ENCODE measurements at regions of chr20 and their contacts with region 1.

Region 1: DNA sequence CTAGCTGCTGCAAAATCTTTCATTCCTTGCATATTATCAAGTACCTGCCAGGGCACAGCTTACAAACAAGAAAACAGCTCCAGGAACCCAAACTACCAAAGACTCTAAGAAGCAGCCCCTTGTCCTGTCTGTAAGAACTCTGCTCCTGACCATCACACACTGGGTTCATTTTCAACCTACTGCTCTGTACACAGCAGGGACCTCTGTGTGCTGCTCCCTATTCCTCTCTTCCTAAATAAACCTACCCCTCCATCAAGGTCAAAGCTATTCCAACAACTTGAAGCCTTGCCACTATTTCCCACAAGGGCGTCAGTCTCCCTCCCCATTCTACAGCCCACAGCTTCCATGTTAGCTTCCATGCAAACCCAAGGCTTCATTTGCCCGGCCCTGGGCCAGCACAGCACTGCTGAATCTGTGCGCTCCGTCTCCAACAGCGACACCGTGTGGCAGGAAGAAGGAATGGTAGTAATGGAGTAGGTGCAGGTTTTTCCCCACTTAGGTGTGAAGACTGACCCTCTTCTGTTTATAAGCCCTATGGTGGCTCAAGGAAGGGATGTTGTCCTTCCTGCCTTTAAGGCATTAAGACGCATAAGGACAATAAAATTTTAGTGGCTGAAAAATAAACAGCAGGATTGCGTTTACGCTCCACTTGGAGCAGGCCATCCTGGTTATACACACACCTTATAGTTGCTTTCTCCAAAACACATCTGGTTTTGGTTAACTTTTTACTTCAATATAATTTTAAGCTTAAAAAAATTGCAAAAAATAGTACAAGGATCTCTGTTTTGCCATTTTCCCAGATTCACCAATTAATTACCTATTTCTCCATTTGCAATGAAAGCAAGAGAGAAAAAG is 115.2 kb upstream of the NXT1 start:
- DNase-seq: peak; percentile 71
- H3K4me3 Mint-ChIP-seq: no peak overlapping the region
- H3K27ac Mint-ChIP-seq: no peak overlapping the region
- H3K4me1 Mint-ChIP-seq: peaks cover 16% of the 10 kb centered on the region
- H3K27me3 Mint-ChIP-seq: no peaks in the 10 kb centered on the region
- CTCF ChIP-seq: peak; percentile 73

Region 2: GRCh38 chr20:22555791-22556564 is 679.4 kb before region 1 on chr20:
- CTCF ChIA-PET with region 1: no interaction called
- POLR2A ChIA-PET with region 1: no interaction called
- intact Hi-C with region 1: no loop called
- DNase-seq: no peak
- H3K4me3 Mint-ChIP-seq: no peak overlapping the region
- H3K27ac Mint-ChIP-seq: no peak overlapping the region
- H3K4me1 Mint-ChIP-seq: no peaks in the 10 kb centered on the region
- H3K27me3 Mint-ChIP-seq: peaks cover 30% of the 10 kb centered on the region
- CTCF ChIP-seq: no peak

Region 3: GRCh38 chr20:22729180-22729579 is 506.2 kb before region 1 on chr20:
- CTCF ChIA-PET with region 1: interaction called, 15 read pairs
- POLR2A ChIA-PET with region 1: no interaction called
- intact Hi-C with region 1: loop called (anchors 10 kb)
- DNase-seq: no peak
- H3K4me3 Mint-ChIP-seq: no peak overlapping the region
- H3K27ac Mint-ChIP-seq: no peak overlapping the region
- H3K4me1 Mint-ChIP-seq: peaks cover 7% of the 10 kb centered on the region
- H3K27me3 Mint-ChIP-seq: no peaks in the 10 kb centered on the region
- CTCF ChIP-seq: no peak

Region 4: DNA sequence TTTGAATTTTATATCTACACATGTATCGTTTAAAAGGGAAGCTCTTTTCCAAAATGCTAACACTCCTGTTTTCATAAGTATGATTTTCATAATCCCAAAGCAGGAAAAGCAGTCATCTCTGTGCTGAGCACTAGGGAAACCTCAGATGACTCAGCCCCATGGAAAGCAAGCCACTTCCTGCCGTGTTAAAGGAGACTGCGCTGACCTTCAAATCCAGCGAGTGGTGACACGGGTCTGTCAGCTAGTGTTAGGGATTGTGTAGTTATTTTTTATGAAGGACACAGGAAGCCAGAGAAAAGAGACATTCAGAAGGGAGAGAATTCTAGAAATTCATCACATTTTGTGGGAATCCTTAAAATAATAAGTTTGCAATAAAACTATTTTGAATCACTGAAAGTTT is 92.3 kb before region 1 on chr20:
- CTCF ChIA-PET with region 1: interaction called, 20 read pairs
- POLR2A ChIA-PET with region 1: no interaction called
- intact Hi-C with region 1: no loop called
- DNase-seq: peak; percentile 89
- H3K4me3 Mint-ChIP-seq: no peak overlapping the region
- H3K27ac Mint-ChIP-seq: peak overlapping the region; percentile 82
- H3K4me1 Mint-ChIP-seq: peaks cover 65% of the 10 kb centered on the region
- H3K27me3 Mint-ChIP-seq: no peaks in the 10 kb centered on the region
- CTCF ChIP-seq: no peak

Region 5: DNA sequence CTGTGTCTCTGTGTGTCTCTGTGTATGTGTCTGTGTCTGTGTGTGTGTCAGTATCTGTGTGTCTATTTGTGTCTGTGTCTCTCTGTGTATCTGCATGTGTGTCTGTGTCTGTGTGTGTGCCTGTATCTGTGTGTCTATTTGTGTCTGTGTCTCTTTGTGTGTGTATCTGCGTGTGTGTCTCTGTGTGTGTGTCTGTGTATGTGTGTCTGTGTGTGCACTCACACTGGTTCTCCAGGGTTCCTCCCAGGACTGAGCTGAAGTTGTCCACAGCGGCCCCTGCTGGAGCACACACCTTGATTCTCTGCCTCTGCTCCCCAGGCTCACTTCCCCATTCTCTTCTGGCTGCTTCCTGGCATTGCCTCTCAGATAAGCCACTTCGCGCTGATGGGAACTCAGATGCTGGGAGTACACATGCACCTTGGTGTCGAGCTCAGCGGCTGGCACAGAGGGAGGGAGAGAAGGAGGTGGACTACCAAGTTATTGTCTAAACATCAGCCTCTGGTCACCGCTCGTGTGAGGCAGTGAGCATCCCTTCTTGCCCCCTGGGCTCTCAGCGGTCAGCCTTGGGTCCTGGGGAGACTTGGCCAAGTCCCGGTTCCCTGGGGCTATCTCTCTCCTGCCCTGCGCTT is 10.3 kb after region 1 on chr20:
- CTCF ChIA-PET with region 1: interaction called, 44 read pairs
- POLR2A ChIA-PET with region 1: interaction called, 4 read pairs
- intact Hi-C with region 1: no loop called
- DNase-seq: peak; percentile 43
- H3K4me3 Mint-ChIP-seq: no peak overlapping the region
- H3K27ac Mint-ChIP-seq: no peak overlapping the region
- H3K4me1 Mint-ChIP-seq: no peaks in the 10 kb centered on the region
- H3K27me3 Mint-ChIP-seq: no peaks in the 10 kb centered on the region
- CTCF ChIP-seq: peak; percentile 36